T-cell (primary cell): ENCODE measurements at regions of chr22 and their contacts with region 1.

Region 1: DNA sequence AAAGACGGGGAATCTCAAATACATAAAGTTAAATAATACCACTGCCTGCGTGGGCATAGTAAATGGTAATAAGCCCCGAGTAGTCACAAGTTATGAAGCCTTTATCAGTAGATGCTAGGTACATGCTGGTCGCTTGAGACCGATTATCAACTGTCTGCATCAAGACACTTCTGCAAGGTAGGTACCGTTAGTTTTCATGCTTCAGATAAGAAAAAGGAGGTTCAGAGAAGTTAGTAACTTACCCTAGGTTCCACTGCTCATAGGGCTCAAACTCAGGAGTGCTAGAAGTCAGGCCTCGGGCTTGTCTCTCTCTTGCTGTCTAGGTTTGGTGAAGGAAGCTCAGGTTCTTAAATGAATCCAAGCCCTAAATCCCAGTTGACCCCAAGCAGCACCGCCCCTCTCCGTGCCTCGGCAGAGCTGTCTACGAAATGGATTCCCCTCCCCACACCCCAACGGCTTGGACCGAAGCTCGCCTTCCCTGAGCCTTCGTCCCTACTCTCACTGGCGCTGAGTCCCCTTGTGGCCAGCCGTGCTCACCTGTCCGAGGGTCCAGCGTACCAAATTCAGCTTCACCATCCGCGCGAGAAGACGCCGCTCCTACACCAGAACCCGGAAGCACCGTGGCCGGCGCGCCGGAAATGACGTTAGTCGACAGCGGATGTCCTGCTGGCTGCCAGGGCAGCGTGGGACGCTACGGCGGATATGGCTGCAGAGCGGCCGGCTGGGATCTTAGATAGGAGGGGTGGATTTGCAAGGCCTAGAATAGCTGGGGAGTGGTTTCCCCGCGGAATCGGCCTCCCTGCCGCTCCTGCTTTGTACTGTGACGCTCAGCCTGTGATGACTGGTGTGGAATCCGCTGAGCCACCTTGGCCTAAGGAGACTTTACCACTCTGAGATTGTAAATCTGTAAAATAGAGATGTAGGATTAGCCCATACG is at the start of gene TFIP11:
- DNase-seq: peak; percentile 67 to 93 (median 86)
- ATAC-seq: peak; percentile 89 to 99 (median 97)
- H3K4me3 ChIP-seq: peak within 1 kb of the TSS; percentile 96 to 99
- H3K4me3 Mint-ChIP-seq: peak within 1 kb of the TSS; percentile 99 to 100 (median 99)
- H3K27ac ChIP-seq: peak within 1 kb of the TSS; percentile 80
- H3K27ac Mint-ChIP-seq: peak within 1 kb of the TSS; percentile 98 to 99
- H3K4me1 ChIP-seq: peaks cover 11 to 21% of the 10 kb centered on the region in 2 experiments
- H3K4me1 Mint-ChIP-seq: peaks cover 45 to 52% (median 50%) of the 10 kb centered on the region in 3 donors
- H3K27me3 ChIP-seq: no peaks in the 10 kb centered on the region
- H3K27me3 Mint-ChIP-seq: no peaks in the 10 kb centered on the region
- total RNA-seq, gene TFIP11: 63.0 to 91.8 (median 75.2) TPM

Region 2: DNA sequence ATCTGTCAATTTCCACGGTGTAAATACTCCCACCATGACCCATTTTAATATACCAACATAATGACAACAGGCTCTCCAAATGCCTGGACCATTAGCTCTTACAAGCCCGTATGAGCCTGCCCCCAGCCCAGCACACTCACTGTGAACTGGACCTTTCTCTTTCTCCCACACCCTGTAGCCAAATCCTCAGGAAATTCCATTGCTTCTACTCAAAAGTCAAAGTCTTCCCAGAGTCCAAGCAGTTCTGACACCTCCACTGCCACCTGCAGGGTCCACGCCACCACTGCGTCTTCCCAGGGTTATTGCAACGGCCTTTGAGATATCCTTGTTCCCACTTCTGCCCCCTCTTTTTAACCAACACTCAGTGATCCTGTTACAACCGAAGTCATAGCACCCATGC is 193.2 kb before region 1 on chr22:
- CTCF ChIA-PET with region 1: no interaction called
- POLR2A ChIA-PET with region 1: no interaction called
- DNase-seq: no peak
- ATAC-seq: no peak
- H3K4me3 ChIP-seq: no peak overlapping the region
- H3K4me3 Mint-ChIP-seq: no peak overlapping the region
- H3K27ac ChIP-seq: no peak overlapping the region
- H3K27ac Mint-ChIP-seq: no peak overlapping the region
- H3K4me1 ChIP-seq: no peaks in the 10 kb centered on the region
- H3K4me1 Mint-ChIP-seq: no peaks in the 10 kb centered on the region
- H3K27me3 ChIP-seq: peaks cover 0 to 19% of the 10 kb centered on the region in 2 experiments
- H3K27me3 Mint-ChIP-seq: peaks cover 3 to 25% of the 10 kb centered on the region in 2 donors

Region 3: DNA sequence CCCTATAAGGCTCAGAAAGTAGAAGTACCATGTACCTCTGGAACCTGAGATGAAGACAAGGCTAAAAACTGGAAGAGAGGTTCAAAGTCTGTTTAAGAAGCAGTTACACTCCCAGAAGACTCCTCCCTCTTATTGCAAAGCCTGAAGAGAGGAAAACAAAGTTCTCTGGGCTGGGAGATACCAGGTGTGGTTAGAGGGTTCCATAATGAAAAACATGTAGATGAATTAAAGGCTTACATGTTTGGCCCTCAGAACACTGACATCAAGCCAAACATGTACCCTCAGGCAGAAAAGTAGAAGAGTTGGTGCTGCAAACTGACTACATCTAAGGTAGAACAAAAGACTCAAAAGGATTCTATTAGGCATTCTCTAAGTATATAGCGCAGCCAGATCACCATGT is 1962.2 kb after region 1 on chr22:
- CTCF ChIA-PET with region 1: no interaction called
- POLR2A ChIA-PET with region 1: interaction called in 1 of 2 experiments, 21 read pairs
- DNase-seq: no peak
- ATAC-seq: no peak
- H3K4me3 ChIP-seq: no peak overlapping the region
- H3K4me3 Mint-ChIP-seq: no peak overlapping the region
- H3K27ac ChIP-seq: no peak overlapping the region
- H3K27ac Mint-ChIP-seq: no peak overlapping the region
- H3K4me1 ChIP-seq: no peaks in the 10 kb centered on the region
- H3K4me1 Mint-ChIP-seq: no peaks in the 10 kb centered on the region
- H3K27me3 ChIP-seq: peaks cover 0 to 3% of the 10 kb centered on the region in 2 experiments
- H3K27me3 Mint-ChIP-seq: peaks cover 9 to 16% of the 10 kb centered on the region in 2 donors